Calu3 (cell line): ENCODE measurements at regions of chrX and their contacts with region 1.

Region 1: DNA sequence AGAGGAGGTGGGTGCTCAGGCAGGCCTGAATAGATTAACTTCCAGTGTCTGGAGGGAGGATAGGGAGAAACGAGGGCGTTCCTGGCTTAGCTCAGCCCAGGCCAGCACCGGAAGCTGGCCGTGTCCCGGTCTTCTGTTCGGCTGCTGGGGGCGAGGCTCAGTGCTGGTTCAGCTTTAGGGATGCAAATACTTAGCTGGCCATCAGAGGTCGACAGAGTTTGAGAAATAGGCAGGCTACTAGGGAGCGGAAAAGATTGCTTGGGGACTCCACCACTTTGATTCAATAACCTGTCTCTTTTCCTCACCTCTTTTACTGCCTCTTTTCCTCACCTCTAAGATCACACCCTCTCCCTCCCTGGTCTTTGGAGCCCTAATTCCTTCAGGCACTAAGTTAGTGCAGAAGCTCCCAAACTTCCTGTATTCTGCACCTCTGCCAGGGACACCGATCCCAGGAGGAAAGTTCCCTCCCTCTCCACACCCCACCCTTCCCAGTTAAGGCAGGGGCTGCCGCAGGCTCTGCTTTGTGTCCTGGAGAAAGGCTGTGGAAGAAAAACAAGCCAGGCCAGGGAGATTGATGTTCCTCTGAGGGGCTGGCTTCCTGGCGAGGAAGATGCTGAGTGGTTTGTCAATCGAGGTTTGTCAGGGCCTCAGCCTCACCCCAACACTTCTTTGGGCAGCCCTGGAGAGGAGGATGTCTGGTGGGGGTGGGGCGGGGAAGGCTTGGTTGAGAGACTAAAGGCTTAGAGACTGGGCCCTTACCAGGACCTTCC is 6.0 kb upstream of the EFNB1 start:
- DNase-seq: peak; percentile 46
- H3K4me3 Mint-ChIP-seq: no peak overlapping the region
- H3K27ac Mint-ChIP-seq: no peak overlapping the region
- H3K4me1 Mint-ChIP-seq: peaks cover 4% of the 10 kb centered on the region
- H3K27me3 Mint-ChIP-seq: peaks cover 24% of the 10 kb centered on the region
- CTCF ChIP-seq: peak; percentile 29

Region 2: GRCh38 chrX:69060631-69061408 is 238.0 kb after region 1 on chrX:
- CTCF ChIA-PET with region 1: interaction called, 45 read pairs
- intact Hi-C with region 1: loop called (anchors 1 kb)
- DNase-seq: peak; percentile 53
- H3K4me3 Mint-ChIP-seq: no peak overlapping the region
- H3K27ac Mint-ChIP-seq: no peak overlapping the region
- H3K4me1 Mint-ChIP-seq: no peaks in the 10 kb centered on the region
- H3K27me3 Mint-ChIP-seq: peaks cover 13% of the 10 kb centered on the region
- CTCF ChIP-seq: no peak